Right cardiac atrium (tissue), 5 donors: ENCODE measurements at regions of chr6 and their contacts with region 1.

Region 1: DNA sequence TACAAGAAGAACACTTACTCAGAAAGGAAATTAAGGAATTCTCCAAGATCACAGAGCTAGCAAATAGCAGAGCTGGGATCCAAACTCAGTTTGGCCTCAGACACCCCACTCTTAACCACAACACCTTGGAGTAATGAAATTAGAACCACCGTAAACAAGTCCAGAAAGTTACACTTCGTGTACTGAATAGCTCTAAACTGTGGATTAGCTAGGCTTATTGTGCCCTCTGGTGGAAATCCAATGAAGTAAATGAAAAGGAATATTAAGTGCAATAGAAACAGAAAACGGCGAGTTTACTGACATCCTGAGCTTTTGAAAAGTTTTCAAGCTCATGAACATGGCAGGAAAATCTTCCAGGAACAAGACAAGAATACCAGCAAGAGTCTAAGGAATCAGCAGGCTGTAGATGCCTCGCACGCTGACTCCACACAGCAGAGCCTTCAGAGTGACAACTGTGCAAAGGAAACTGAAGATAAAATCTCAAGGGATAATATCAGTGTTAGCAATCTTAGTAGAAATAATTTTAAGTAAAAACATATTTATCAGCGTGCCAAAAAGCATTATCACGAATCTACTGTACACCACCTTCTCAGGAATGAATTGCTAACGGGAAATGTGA is 34.6 kb downstream of the FBXO5 start:
- DNase-seq: no peak
- ATAC-seq: peak; percentile 57
- H3K4me3 ChIP-seq: no peak overlapping the region
- H3K27ac ChIP-seq: no peak overlapping the region
- H3K4me1 ChIP-seq: no peaks in the 10 kb centered on the region
- H3K27me3 ChIP-seq: no peaks in the 10 kb centered on the region

Region 2: DNA sequence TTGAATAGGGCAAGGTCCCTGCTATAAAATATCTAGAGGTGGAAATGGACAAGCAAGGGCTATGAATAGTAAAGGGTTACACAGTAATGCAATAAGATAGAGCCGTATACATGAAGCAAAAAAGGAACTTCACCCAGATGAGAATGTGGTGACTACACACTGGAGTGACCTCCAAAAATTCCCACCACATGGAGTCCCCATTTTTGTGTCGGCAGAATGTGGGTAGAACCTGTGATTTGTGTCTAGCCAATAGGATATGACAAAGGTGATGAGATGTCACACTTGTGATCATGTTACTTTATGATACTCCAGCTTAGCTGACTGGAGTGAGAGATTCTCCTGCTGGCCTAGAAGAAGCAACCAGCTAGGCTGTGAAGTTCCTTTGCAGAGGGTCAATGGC is 407.9 kb before region 1 on chr6:
- intact Hi-C with region 1: loop called in 1 of 4 experiments (anchors 10 kb)
- DNase-seq: no peak
- ATAC-seq: no peak
- H3K4me3 ChIP-seq: no peak overlapping the region
- H3K27ac ChIP-seq: no peak overlapping the region
- H3K4me1 ChIP-seq: no peaks in the 10 kb centered on the region
- H3K27me3 ChIP-seq: no peaks in the 10 kb centered on the region

Region 3: DNA sequence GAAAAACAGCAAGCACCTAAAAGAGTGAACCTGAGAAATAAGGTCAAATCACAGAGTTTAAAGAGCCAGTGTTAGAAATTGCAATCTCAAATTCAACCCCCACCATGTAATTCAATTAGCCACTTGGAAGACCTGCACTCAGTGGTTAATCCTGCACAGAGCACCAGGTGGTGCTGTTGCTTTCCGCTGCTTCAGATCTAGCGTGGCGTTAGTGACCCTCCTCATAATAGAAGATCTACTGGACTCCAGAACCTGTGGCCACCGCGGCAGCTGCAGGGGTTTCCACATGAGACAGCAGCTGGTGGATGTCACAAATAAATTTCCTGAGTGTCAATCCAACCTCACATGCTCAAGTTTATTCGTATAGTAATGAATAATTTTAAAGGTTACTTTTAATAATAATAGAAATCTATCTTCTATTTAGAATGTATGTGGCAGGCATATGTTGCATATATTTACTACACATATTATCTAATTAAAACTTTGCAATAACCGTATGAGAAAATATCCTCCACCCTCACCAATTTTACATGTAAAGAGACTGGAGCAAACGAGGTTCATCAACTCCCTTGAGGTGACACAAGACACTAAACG is 395.5 kb before region 1 on chr6:
- intact Hi-C with region 1: loop called in 2 of 4 experiments (anchors 5 to 10 kb)
- DNase-seq: peak; percentile 65 to 86 (median 76)
- ATAC-seq: peak; percentile 90 to 93
- H3K4me3 ChIP-seq: no peak overlapping the region
- H3K27ac ChIP-seq: no peak overlapping the region
- H3K4me1 ChIP-seq: no peaks in the 10 kb centered on the region
- H3K27me3 ChIP-seq: no peaks in the 10 kb centered on the region

Region 4: GRCh38 chr6:152863618-152864326 is 84.5 kb before region 1 on chr6:
- intact Hi-C with region 1: loop called (anchors 5 kb)
- DNase-seq: peak; percentile 31 to 57 (median 53)
- ATAC-seq: peak; percentile 74 to 78
- H3K4me3 ChIP-seq: no peak overlapping the region
- H3K27ac ChIP-seq: no peak overlapping the region
- H3K4me1 ChIP-seq: no peaks in the 10 kb centered on the region
- H3K27me3 ChIP-seq: no peaks in the 10 kb centered on the region

Region 5: DNA sequence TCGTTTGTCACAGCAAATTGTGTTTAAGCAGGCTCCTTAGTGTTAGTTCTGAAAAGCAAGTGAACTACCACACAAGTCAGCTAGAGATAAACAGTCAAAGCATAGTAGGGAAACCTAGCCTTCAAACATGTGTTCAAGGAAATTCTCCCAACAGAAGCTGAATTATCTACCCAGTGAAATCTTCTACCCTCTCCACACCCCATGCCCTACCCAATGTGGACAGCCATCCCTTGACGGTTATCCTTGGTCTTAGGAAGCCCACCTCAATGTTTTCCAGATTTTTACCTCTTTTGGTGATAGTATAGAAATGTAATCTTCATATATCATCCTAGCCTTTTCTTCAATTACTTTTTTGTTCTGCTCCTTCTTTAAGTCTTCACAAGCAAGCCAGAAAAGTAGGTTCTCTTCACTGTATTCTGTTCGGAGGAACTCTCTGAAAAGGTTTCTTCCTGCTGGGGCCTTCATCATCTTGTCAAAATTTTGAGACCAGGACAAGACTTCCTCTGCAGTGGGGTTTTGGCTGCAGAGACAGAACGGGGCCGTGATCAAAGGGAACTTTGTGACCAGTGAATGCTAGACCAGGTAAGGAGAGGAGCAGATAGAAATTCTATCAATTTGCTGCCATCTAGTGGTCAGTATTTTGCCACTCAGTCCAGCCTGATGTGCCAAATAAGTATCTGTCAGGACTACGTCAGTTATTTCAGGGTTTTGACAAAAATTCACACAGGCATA is 75.9 kb after region 1 on chr6:
- intact Hi-C with region 1: loop called in 1 of 4 experiments (anchors 10 kb)
- DNase-seq: no peak
- ATAC-seq: peak; percentile 75 to 87
- H3K4me3 ChIP-seq: no peak overlapping the region
- H3K27ac ChIP-seq: no peak overlapping the region
- H3K4me1 ChIP-seq: no peaks in the 10 kb centered on the region
- H3K27me3 ChIP-seq: no peaks in the 10 kb centered on the region

Region 6: DNA sequence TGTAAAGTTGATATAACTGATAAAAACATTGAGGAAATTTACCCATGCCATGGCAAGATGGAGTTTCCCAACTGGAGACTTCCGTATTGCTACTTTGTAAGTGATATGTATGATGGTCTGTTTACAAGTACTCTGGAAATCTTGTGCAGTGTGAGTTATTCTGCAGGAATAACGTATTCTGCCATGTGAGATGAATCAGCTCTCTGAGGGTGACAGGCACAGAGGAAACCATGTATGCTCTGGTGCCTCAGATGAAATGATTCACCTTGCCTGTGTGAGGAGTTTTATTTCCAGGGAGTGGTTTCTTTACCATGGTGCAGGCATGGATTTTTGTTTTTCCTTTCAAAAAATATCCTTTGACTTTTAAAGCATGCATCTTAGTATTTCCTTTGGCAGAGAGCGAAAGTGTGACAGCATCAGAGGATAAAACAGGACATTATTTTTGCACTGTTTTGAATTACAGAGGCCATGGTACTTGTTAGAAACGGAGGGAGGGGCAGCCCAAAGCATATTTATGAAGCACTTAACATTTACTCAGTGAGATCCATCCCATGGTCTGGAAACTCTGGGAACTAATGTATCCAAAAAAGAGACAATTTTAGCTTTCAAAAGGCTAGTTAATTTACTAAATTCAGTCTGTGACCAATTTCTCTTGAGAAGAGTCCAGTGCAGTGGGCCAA is 90.3 kb after region 1 on chr6:
- intact Hi-C with region 1: no loop called
- DNase-seq: no peak
- ATAC-seq: no peak
- H3K4me3 ChIP-seq: no peak overlapping the region
- H3K27ac ChIP-seq: no peak overlapping the region
- H3K4me1 ChIP-seq: no peaks in the 10 kb centered on the region
- H3K27me3 ChIP-seq: no peaks in the 10 kb centered on the region

Region 7: GRCh38 chr6:153059761-153060160 is 111.5 kb after region 1 on chr6:
- intact Hi-C with region 1: no loop called
- DNase-seq: no peak
- ATAC-seq: no peak
- H3K4me3 ChIP-seq: no peak overlapping the region
- H3K27ac ChIP-seq: no peak overlapping the region
- H3K4me1 ChIP-seq: no peaks in the 10 kb centered on the region
- H3K27me3 ChIP-seq: no peaks in the 10 kb centered on the region

Region 8: DNA sequence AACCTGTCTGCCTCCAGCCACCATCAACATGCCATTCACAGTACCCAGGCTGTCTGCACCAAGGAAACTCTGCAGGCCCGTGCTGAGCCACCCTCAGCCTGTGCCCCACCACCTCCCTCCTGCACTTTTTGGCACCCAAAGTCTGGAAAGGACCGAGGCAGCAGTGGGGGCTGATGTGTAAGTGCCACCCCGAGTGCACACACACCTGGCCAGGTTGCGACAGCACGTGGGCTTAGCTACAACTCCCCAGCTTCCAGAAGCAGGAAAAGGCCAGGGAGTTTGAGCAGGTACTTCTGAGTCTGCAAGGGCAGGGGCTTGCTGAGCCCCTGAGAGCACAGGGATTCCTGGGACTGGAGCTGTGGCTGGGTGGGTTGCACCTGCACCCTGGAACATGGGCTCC is 787.5 kb after region 1 on chr6:
- intact Hi-C with region 1: no loop called
- DNase-seq: no peak
- ATAC-seq: no peak
- H3K4me3 ChIP-seq: no peak overlapping the region
- H3K27ac ChIP-seq: no peak overlapping the region
- H3K4me1 ChIP-seq: no peaks in the 10 kb centered on the region
- H3K27me3 ChIP-seq: no peaks in the 10 kb centered on the region